Naive thymus-derived CD8-positive, alpha-beta T cell (primary cell): ENCODE measurements at regions of chr11 and their contacts with region 1.

Region 1: GRCh38 chr11:65418711-65419459 is 3.7 kb upstream of the NEAT1 start:
- DNase-seq: peak in 9 of 10 donors; percentile 30 to 89 (median 53)
- ATAC-seq: peak in 1 of 2 donors; percentile 7
- H3K4me3 Mint-ChIP-seq: peak overlapping the region; percentile 89 to 98 (median 96)
- H3K27ac Mint-ChIP-seq: peak overlapping the region; percentile 94 to 100 (median 99)
- H3K4me1 Mint-ChIP-seq: peaks cover 38 to 72% (median 58%) of the 10 kb centered on the region in 4 donors
- H3K27me3 Mint-ChIP-seq: peaks cover 0 to 4% (median 0%) of the 10 kb centered on the region in 5 donors

Region 2: GRCh38 chr11:65382033-65382807 is 36.7 kb before region 1 on chr11 and contains the start of gene SLC25A45:
- POLR2A ChIA-PET with region 1: interaction called, 280 read pairs
- DNase-seq: peak; percentile 84 to 96 (median 91)
- ATAC-seq: peak; percentile 86 to 88
- H3K4me3 Mint-ChIP-seq: peak within 1 kb of the TSS; percentile 80 to 97 (median 92)
- H3K27ac Mint-ChIP-seq: peak within 1 kb of the TSS; percentile 96 to 100 (median 99)
- H3K4me1 Mint-ChIP-seq: peaks cover 34 to 72% (median 57%) of the 10 kb centered on the region in 4 donors
- H3K27me3 Mint-ChIP-seq: no peaks in the 10 kb centered on the region
- polyA plus RNA-seq, gene SLC25A45: 10.8 to 19.2 (median 11.0) TPM

Region 3: DNA sequence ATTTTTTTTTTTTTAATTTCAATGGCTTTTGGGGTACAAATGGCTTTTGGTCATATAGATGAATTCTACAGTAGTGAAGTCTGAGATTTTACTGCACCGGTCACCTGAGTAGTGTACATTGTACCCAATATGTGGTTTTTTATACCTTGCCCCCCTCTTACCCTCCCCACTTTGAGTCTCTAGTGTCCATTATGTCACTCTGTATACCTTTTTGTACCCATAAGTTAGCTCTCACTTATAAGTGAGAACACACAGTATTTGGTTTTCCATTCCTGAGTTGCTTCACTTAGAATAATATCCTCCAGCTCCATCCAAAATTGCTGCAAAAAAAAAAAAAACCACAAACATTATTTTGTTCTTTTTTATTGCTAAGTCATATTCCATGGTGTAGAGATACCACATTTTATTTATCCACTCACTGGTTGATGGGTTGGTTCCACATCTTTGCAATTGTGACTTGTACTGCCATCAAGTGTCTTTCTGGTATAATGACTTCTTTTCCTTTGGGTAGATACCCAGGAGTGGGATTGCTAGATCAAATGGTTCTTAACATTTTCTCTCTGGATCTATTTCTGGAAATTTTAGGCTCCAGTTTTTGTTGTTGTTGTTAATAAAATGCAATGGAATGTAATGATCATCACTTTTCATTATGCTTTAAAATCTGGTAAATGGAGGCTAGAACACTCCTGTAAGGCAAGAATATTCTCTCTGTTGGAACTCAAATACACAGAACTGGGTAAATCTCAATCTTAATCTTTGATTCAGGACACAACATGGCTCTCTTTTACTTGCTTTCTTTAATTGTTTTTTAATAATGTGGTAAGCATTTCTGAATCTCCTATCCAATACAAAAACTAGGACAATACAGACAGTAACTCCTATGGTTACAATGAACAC is 14.0 kb after region 1 on chr11:
- POLR2A ChIA-PET with region 1: interaction called, 162 read pairs
- DNase-seq: peak in 5 of 10 donors; percentile 37 to 74 (median 59)
- ATAC-seq: peak; percentile 31 to 54
- H3K4me3 Mint-ChIP-seq: peak overlapping the region in 6 of 10 donors; percentile 11 to 71 (median 48)
- H3K27ac Mint-ChIP-seq: peak overlapping the region; percentile 26 to 100 (median 82)
- H3K4me1 Mint-ChIP-seq: peaks cover 39 to 94% (median 79%) of the 10 kb centered on the region in 4 donors
- H3K27me3 Mint-ChIP-seq: no peaks in the 10 kb centered on the region

Region 4: GRCh38 chr11:65440831-65441499 is 22.1 kb after region 1 on chr11:
- POLR2A ChIA-PET with region 1: interaction called, 50 read pairs
- DNase-seq: no peak
- ATAC-seq: no peak
- H3K4me3 Mint-ChIP-seq: peak overlapping the region in 9 of 10 donors; percentile 1 to 73 (median 49)
- H3K27ac Mint-ChIP-seq: peak overlapping the region in 8 of 10 donors; percentile 25 to 90 (median 82)
- H3K4me1 Mint-ChIP-seq: peaks cover 21 to 79% (median 58%) of the 10 kb centered on the region in 4 donors
- H3K27me3 Mint-ChIP-seq: no peaks in the 10 kb centered on the region

Region 5: DNA sequence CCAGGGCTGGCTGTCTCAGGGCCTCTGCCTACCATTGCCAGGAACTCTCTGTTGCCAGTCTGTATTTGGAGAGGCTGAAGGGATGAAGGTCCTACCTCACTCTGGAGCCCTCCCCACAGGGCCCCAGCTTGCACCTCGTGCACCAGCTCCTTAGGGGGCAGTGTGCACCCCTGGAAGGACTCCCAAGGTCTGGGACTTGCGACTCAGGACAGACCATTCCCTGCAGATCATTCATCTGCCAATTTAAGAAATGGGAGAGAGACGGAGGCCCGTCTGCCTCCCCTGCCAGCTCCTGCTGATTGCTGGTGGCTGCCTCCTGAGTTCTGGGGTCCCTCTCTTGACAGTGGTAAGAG is 52.5 kb after region 1 on chr11:
- POLR2A ChIA-PET with region 1: interaction called, 162 read pairs
- DNase-seq: peak in 4 of 10 donors; percentile 11 to 30 (median 22)
- ATAC-seq: peak in 1 of 2 donors; percentile 9
- H3K4me3 Mint-ChIP-seq: peak overlapping the region in 8 of 10 donors; percentile 11 to 90 (median 81)
- H3K27ac Mint-ChIP-seq: peak overlapping the region; percentile 93 to 99 (median 99)
- H3K4me1 Mint-ChIP-seq: peaks cover 5 to 42% (median 27%) of the 10 kb centered on the region in 4 donors
- H3K27me3 Mint-ChIP-seq: no peaks in the 10 kb centered on the region

Region 6: DNA sequence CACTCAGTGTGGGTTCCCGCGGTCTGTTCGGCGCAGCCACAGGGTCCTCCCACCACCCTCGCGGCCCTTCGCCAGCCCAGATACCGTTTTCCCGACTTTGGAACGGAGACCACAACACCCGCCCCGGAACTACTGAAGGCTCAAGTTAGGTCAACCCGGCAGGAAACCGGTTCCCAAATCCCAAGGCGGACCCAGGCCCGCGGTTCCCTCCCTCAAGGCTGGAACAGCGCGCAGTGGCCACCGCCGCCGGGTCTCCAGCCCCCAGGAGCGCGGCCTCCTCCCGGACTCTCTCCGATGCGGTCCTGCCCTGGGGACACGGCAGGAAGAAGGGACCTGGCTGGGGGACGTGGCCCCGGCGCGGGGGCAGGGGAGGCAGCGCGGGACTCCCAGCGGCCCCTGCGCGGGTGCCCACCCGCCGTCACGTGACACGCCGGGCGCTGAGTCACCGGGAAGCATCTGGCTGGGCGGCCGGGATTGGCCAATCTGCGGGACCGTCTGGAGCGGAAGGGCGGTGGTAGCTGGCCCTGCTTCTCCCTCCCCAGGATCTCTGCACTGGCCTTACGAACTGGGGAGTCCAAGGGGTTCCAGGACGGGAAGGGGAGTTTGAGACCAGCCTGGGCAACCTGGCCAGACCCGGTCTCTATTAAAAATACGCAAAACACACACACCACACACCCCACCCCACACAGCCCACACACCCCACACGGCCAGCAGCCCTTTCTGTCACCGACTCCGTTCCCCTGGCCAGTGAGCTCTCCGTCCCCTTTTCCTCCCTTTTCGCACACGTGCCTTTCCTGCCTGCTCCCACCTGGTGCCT is 58.5 kb after region 1 on chr11:
- POLR2A ChIA-PET with region 1: interaction called, 162 read pairs
- DNase-seq: peak; percentile 68 to 91 (median 80)
- ATAC-seq: peak; percentile 85 to 90
- H3K4me3 Mint-ChIP-seq: peak overlapping the region; percentile 88 to 100 (median 100)
- H3K27ac Mint-ChIP-seq: peak overlapping the region; percentile 96 to 100 (median 99)
- H3K4me1 Mint-ChIP-seq: peaks cover 10 to 24% (median 19%) of the 10 kb centered on the region in 4 donors
- H3K27me3 Mint-ChIP-seq: peaks cover 0 to under 1% (median 0%) of the 10 kb centered on the region in 5 donors

Region 7: GRCh38 chr11:65524741-65525545 is 106.1 kb after region 1 on chr11 and contains the start of gene SCYL1:
- POLR2A ChIA-PET with region 1: interaction called, 11 read pairs
- DNase-seq: peak; percentile 68 to 91 (median 80)
- ATAC-seq: peak; percentile 64 to 73
- H3K4me3 Mint-ChIP-seq: peak within 1 kb of the TSS; percentile 77 to 96 (median 88)
- H3K27ac Mint-ChIP-seq: peak within 1 kb of the TSS; percentile 90 to 99 (median 95)
- H3K4me1 Mint-ChIP-seq: peaks cover 36 to 66% (median 61%) of the 10 kb centered on the region in 4 donors
- H3K27me3 Mint-ChIP-seq: no peaks in the 10 kb centered on the region
- polyA plus RNA-seq, gene SCYL1: 23.2 to 41.5 (median 33.5) TPM